ENCODE measurements at regions of chr11 and their contacts with region 1.

Region 1: GRCh38 chr11:19116971-19117750 is at the start of gene ZDHHC13:
- DNase-seq: peak; percentile 90
- H3K4me3 ChIP-seq: peak within 1 kb of the TSS; percentile 77 to 98 (median 81)
- H3K27ac ChIP-seq: peak within 1 kb of the TSS; percentile 55
- H3K4me1 ChIP-seq: peaks cover 4% of the 10 kb centered on the region
- H3K27me3 ChIP-seq: no peaks in the 10 kb centered on the region
- CTCF ChIP-seq: peak; percentile 10 to 62
- total RNA-seq, gene ZDHHC13: 17.9 to 23.2 TPM

Region 2: GRCh38 chr11:19276859-19277808 is 160.0 kb after region 1 on chr11:
- CTCF ChIA-PET with region 1: no interaction called
- dilution Hi-C with region 1: no loop called
- in situ Hi-C with region 1: no loop called
- intact Hi-C with region 1: loop called (anchors 1 kb)
- DNase-seq: peak; percentile 93
- H3K4me3 ChIP-seq: no peak overlapping the region
- H3K27ac ChIP-seq: peak overlapping the region; percentile 77
- H3K4me1 ChIP-seq: peaks cover 31% of the 10 kb centered on the region
- H3K27me3 ChIP-seq: no peaks in the 10 kb centered on the region
- CTCF ChIP-seq: no peak

Measured in mammary epithelial cell (primary cell).